ENCODE measurements at regions of chr9 and their contacts with region 1.

Region 1: GRCh38 chr9:107282753-107283625 is at the start of gene RAD23B:
- DNase-seq: peak; percentile 99
- ATAC-seq: peak; percentile 82
- H3K4me3 Mint-ChIP-seq: peak within 1 kb of the TSS; percentile 91
- H3K27ac Mint-ChIP-seq: peak within 1 kb of the TSS; percentile 93
- H3K4me1 Mint-ChIP-seq: peaks cover 64% of the 10 kb centered on the region
- H3K27me3 Mint-ChIP-seq: no peaks in the 10 kb centered on the region
- CTCF ChIP-seq: no peak
- total RNA-seq, gene RAD23B: 75.3 and 82.6 TPM in 2 replicates

Region 2: GRCh38 chr9:107243751-107244150 is 39.2 kb before region 1 on chr9:
- CTCF ChIA-PET with region 1: interaction called, 9 read pairs
- POLR2A ChIA-PET with region 1: interaction called, 3 read pairs
- intact Hi-C with region 1: loop called (anchors 2 kb)
- DNase-seq: no peak
- ATAC-seq: peak; percentile 68
- H3K4me3 Mint-ChIP-seq: no peak overlapping the region
- H3K27ac Mint-ChIP-seq: no peak overlapping the region
- H3K4me1 Mint-ChIP-seq: peaks cover 18% of the 10 kb centered on the region
- H3K27me3 Mint-ChIP-seq: peaks cover 4% of the 10 kb centered on the region
- CTCF ChIP-seq: no peak

Region 3: GRCh38 chr9:107299437-107299836 is 16.4 kb after region 1 on chr9:
- CTCF ChIA-PET with region 1: interaction called, 4 read pairs
- POLR2A ChIA-PET with region 1: interaction called, 5 read pairs
- intact Hi-C with region 1: loop called (anchors 1 kb)
- DNase-seq: no peak
- ATAC-seq: peak; percentile 5
- H3K4me3 Mint-ChIP-seq: no peak overlapping the region
- H3K27ac Mint-ChIP-seq: no peak overlapping the region
- H3K4me1 Mint-ChIP-seq: peaks cover 38% of the 10 kb centered on the region
- H3K27me3 Mint-ChIP-seq: no peaks in the 10 kb centered on the region
- CTCF ChIP-seq: no peak

Region 4: DNA sequence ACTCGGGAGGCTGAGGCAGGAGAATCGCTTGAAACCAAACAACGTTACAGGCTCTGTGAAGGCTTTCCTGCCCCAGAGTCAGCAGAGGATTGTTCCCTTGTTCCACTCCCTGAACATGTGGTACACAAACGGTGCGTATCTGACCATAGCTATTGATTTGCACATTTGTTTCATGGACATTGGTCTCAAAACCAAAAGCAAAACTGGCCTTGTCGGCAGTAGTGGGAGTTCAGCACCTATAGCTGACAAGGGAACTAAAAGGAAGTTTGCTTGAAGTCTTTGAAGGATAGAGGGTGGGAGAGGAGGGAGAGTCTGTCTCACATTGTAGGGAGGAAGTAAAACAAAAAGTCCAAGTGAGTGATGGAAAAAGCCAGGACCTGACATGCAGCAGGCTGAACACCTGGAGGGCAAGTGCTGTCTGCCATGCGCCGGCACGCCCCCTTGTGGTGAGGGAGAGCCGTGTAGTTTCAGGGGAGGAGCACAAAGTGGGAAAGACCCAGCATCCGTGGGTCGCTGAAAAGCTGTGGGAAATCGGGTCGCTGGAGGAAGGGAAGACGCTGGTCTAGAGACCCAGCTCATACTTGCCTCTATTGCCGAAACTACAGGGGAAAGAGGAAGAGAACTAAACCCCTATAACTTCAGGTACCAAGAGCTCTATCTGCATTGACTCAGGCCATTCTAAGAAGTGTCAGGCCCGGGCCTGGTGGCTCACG is 58.1 kb after region 1 on chr9:
- CTCF ChIA-PET with region 1: interaction called, 9 read pairs
- POLR2A ChIA-PET with region 1: interaction called, 8 read pairs
- intact Hi-C with region 1: loop called (anchors 2 kb)
- DNase-seq: peak; percentile 77
- ATAC-seq: peak; percentile 83
- H3K4me3 Mint-ChIP-seq: peak overlapping the region; percentile 22
- H3K27ac Mint-ChIP-seq: peak overlapping the region; percentile 36
- H3K4me1 Mint-ChIP-seq: peaks cover 9% of the 10 kb centered on the region
- H3K27me3 Mint-ChIP-seq: no peaks in the 10 kb centered on the region
- CTCF ChIP-seq: peak; percentile 38

Region 5: GRCh38 chr9:107874591-107875369 is 591.8 kb after region 1 on chr9:
- CTCF ChIA-PET with region 1: no interaction called
- POLR2A ChIA-PET with region 1: no interaction called
- intact Hi-C with region 1: loop called (anchors 5 kb)
- DNase-seq: no peak
- ATAC-seq: peak; percentile 65
- H3K4me3 Mint-ChIP-seq: peak overlapping the region; percentile 59
- H3K27ac Mint-ChIP-seq: peak overlapping the region; percentile 56
- H3K4me1 Mint-ChIP-seq: peaks cover 81% of the 10 kb centered on the region
- H3K27me3 Mint-ChIP-seq: no peaks in the 10 kb centered on the region
- CTCF ChIP-seq: no peak

Region 6: GRCh38 chr9:109012876-109013678 is 1730.1 kb after region 1 on chr9 and contains the start of gene CTNNAL1:
- CTCF ChIA-PET with region 1: no interaction called
- POLR2A ChIA-PET with region 1: interaction called, 3 read pairs
- intact Hi-C with region 1: loop called (anchors 10 kb)
- DNase-seq: peak; percentile 88
- ATAC-seq: peak; percentile 96
- H3K4me3 Mint-ChIP-seq: peak within 1 kb of the TSS; percentile 92
- H3K27ac Mint-ChIP-seq: peak within 1 kb of the TSS; percentile 72
- H3K4me1 Mint-ChIP-seq: peaks cover 38% of the 10 kb centered on the region
- H3K27me3 Mint-ChIP-seq: peaks cover 9% of the 10 kb centered on the region
- CTCF ChIP-seq: no peak
- total RNA-seq, gene CTNNAL1: 1.9 and 2.4 TPM in 2 replicates

Measured in activated B cell treated with CpG ODN at 0.5 μM for 24 hours (primary cell).